ENCODE measurements at regions of chr20 and their contacts with region 1.

Region 1: GRCh38 chr20:50070991-50071888 is 41.7 kb downstream of the UBE2V1 start:
- DNase-seq: peak; percentile 95
- H3K27ac ChIP-seq: no peak overlapping the region
- CTCF ChIP-seq: peak; percentile 100

Region 2: GRCh38 chr20:49964964-49965780 is 106.1 kb before region 1 on chr20:
- CTCF ChIA-PET with region 1: interaction called, 15 read pairs
- POLR2A ChIA-PET with region 1: no interaction called
- DNase-seq: peak; percentile 60
- H3K27ac ChIP-seq: no peak overlapping the region
- CTCF ChIP-seq: peak; percentile 62

Region 3: GRCh38 chr20:49973995-49974394 is 97.2 kb before region 1 on chr20:
- CTCF ChIA-PET with region 1: interaction called, 416 read pairs
- POLR2A ChIA-PET with region 1: interaction called, 4 read pairs
- DNase-seq: no peak
- H3K27ac ChIP-seq: no peak overlapping the region
- CTCF ChIP-seq: no peak

Region 4: DNA sequence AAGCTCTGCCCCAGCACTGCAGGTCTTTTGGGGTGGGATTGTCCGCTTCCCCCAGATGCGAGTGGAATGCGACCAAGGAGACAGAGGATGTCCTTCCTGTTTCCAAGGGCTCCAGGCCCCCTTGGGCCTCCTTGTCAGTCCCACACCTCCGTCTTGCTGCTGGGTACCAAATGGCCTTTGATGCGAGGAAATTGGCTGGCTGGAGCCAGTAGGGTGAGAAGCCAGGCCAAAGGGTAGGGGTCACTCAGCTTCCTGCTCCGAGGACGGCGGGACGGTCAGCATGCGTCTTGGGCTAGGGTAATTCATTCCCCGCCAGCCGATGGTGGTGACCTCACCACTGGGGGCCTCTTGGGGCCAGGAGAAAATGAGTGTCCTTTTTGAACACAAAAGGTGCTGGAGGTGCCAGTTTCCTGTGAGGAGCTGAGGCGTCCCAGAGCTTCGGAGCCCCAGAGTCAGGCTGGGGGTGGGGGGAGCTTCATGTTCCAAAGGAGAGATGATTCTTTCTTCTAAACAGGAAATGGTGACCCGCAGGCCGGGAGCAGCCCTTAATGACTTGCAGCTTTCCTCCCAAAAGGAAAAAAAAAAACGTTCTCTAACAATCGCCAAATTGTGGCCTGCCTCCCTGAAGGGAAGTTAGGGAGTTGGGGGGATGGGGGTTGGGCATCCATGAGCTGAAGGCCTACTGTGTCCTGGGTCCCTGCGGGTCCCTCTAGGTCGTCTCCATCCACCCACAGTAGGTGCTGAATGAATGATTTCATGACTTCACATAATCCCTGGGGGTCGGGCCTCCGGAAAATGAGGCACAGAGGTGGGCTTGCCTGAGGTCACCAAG is 81.8 kb before region 1 on chr20:
- CTCF ChIA-PET with region 1: interaction called, 416 read pairs
- POLR2A ChIA-PET with region 1: interaction called, 3 read pairs
- DNase-seq: no peak
- H3K27ac ChIP-seq: no peak overlapping the region
- CTCF ChIP-seq: no peak

Region 5: GRCh38 chr20:50038574-50039012 is 32.6 kb before region 1 on chr20:
- CTCF ChIA-PET with region 1: interaction called, 15 read pairs
- POLR2A ChIA-PET with region 1: no interaction called
- DNase-seq: no peak
- H3K27ac ChIP-seq: no peak overlapping the region
- CTCF ChIP-seq: no peak

Region 6: DNA sequence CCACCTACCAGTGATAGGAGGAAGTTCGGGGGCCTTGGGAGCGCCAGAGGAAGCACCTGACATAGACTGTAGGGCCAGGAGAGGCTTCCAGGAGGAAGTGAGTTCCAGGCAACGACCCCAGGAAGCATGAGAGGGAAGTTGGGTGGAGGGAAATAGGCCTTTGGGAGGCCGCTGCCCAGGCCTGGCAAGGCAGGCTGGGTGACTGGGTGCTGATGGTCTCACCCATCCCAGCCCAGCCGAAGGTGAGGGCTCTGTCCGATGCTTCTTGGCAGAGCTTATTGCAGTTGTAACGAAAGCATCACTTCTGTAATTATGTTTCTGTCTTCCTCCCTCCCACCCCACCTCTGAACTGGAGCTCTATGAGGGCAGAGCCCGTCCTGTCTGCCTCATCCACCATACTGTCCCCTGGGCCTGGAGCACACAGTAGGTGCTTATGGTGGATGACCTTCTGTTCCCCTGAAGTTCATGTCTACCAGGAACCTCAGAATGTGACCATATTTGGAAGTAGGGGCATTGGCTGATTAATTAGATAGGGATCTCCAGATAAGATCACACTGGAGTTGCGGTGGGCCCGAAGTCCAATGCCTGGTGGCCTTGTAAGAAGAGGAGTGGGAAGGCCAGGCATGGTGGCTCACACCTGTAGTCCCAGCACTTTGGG is 12.4 kb before region 1 on chr20:
- CTCF ChIA-PET with region 1: interaction called, 32 read pairs
- POLR2A ChIA-PET with region 1: interaction called, 3 read pairs
- DNase-seq: no peak
- H3K27ac ChIP-seq: no peak overlapping the region
- CTCF ChIP-seq: no peak

Region 7: GRCh38 chr20:50085452-50086365 is 14.5 kb after region 1 on chr20:
- CTCF ChIA-PET with region 1: interaction called, 57 read pairs
- POLR2A ChIA-PET with region 1: no interaction called
- DNase-seq: peak; percentile 86
- H3K27ac ChIP-seq: peak overlapping the region; percentile 70
- CTCF ChIP-seq: peak; percentile 98

Measured in RWPE1 (cell line).